ENCODE measurements at regions of chr15 and their contacts with region 1.

Region 1: DNA sequence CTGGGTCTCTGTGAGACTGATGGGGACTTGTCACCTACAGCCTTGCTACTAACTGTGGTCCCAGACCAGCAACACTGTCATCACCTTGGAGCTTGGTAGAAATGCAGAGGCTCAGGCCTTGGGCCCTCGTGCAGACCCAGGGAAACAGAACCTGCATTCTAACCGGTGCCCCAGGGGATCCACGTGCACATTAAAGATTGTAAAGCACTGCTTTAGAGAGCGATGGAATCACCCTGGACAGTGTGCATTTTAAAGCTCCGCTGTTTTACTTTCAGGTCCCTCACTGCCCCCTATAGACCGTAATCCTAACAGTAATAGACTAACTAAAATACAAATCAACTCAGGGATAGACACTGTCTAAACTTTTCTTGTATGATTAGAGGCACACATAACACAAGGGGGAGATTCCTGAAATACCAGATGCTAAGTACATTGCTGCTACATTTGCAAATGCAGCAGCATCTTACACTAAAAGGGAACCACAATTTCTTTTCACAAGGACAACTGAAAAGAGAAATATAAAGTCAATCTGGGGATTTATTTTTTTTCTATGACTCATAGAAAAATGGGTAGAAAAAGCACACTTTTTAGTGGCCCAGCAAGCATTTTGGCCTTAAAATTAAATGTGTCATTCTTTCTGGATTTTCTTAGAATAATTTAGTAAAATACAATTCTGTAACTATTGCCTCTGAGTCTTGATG is 10.5 kb upstream of the SH3GL3 start:
- DNase-seq: no peak
- ATAC-seq: no peak
- H3K4me3 ChIP-seq: no peak overlapping the region
- H3K27ac ChIP-seq: no peak overlapping the region
- H3K4me1 ChIP-seq: no peaks in the 10 kb centered on the region
- H3K27me3 ChIP-seq: no peaks in the 10 kb centered on the region

Region 2: DNA sequence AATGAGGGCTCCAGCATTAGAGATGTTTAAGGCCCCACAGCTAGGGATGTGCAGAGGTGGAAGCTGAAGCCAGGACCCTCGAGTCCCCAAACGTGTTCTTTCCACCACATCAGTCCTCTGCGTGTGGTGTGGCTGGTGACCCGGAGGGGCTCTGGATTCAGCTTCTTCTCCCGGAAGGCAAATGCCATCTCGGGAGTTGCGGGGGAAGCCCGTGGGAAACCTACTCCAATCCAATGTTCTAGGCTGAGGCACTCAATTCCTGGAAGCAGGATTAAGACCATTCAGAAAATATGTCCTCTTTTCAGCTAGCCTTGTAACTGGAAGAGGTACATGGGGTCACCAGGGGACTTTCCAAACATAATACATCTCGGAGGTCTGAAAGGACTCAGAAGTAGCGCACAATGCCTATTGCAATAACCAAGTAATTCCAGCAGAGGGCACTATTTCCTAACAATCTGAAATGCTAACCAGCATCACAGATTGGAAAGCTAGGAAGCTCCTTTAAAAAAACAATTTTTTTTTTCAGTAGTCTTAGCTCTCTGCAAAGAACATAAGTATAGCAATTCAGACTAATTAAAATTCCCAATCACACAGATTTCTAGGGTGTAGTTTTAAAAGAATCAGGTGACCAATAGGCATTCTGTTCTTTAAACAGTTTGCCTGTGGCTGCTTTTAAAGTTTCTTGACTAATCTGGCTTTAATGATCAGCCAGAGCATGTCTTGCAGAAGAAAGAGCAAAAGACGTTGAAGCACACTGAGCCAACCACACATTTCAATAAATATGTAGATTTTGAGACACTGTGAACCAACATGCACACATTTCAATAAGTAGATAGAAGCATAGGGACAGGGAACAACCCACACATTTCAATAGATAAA is 188.2 kb before region 1 on chr15:
- intact Hi-C with region 1: loop called in 1 of 2 experiments (anchors 5 kb)
- DNase-seq: no peak
- ATAC-seq: peak; percentile 74
- H3K4me3 ChIP-seq: no peak overlapping the region
- H3K27ac ChIP-seq: no peak overlapping the region
- H3K4me1 ChIP-seq: no peaks in the 10 kb centered on the region
- H3K27me3 ChIP-seq: no peaks in the 10 kb centered on the region

Region 3: GRCh38 chr15:83516935-83517334 is 80.3 kb after region 1 on chr15:
- intact Hi-C with region 1: no loop called
- DNase-seq: no peak
- ATAC-seq: no peak
- H3K4me3 ChIP-seq: no peak overlapping the region
- H3K27ac ChIP-seq: no peak overlapping the region
- H3K4me1 ChIP-seq: no peaks in the 10 kb centered on the region
- H3K27me3 ChIP-seq: no peaks in the 10 kb centered on the region

Region 4: DNA sequence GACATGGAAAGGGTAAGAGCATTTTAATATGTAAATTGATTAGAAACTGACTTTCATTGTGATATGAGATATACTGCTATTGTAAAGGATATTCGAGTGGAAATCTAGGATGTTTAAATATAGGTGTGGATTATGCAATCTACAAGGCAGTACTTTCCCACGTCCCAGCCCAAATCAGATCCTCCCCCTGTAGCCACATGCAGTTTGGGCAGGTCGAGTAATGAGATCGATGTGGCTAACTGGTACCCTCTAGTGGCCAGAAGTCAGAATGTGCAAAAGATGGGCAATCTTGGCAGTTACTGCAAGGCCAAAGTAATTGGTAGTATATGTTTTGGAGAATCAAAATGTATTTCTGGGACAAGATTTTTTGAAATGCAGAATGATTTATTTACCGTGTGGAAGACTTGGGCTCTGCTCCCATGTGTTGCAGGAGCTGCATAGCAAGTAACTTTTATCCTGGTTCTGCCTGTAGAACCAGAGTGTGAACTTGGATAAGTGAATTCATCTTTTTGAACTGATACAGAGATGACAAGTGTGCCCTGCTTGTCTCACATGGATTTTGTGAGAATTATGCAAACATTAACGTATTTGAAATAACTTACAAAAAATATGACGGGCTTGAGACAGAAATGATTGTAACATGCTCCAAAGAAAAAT is 122.8 kb after region 1 on chr15:
- intact Hi-C with region 1: loop called (anchors 1 to 2 kb)
- DNase-seq: no peak
- ATAC-seq: peak; percentile 76
- H3K4me3 ChIP-seq: no peak overlapping the region
- H3K27ac ChIP-seq: no peak overlapping the region
- H3K4me1 ChIP-seq: no peaks in the 10 kb centered on the region
- H3K27me3 ChIP-seq: peaks cover 0 to 2% of the 10 kb centered on the region in 2 donors

Region 5: GRCh38 chr15:84023636-84024035 is 587.0 kb after region 1 on chr15:
- intact Hi-C with region 1: loop called (anchors 10 kb)
- DNase-seq: no peak
- ATAC-seq: no peak
- H3K4me3 ChIP-seq: no peak overlapping the region
- H3K27ac ChIP-seq: no peak overlapping the region
- H3K4me1 ChIP-seq: no peaks in the 10 kb centered on the region
- H3K27me3 ChIP-seq: no peaks in the 10 kb centered on the region